B cell (primary cell): ENCODE measurements at regions of chr2 and their contacts with region 1.

Region 1: DNA sequence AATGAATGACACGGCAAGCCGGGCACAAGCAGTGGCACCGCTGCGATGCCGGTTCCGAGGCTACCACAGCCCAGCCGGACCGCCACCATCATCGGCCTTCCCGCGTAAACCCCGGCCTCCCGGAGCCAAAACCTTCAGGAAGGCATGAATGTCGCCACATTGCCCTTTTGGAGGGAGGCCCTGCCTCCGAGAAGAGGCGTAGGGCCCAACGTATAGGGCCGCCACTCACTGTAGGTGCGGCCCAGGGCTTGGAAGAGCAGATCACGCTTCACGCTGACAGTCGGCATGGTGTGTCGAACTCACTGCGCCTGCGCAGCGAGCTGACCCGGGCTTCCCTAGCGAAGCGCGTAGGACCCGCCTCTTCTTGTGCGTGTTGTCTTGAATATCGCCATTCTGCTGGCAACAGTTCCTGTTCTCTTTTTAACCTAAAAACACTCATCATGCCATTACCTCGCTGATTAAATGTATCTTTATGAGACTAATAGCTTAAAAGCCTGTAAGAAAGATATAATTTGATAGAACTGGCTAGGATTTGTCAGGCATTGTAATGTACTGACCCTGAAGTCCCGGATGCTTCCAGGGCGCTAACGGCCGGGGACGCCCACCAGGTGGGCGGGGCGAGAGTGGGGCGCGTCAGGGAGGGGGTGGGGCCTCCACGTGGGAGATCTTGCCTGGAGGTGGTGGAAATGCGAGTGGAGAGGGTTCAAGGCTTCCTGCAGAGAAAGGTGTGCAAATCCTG is at the start of gene FARSB:
- DNase-seq: peak; percentile 98
- ATAC-seq: peak; percentile 93
- H3K4me3 ChIP-seq: peak within 1 kb of the TSS; percentile 72 to 95 (median 93)
- H3K4me3 Mint-ChIP-seq: peak within 1 kb of the TSS; percentile 99
- H3K27ac ChIP-seq: peak within 1 kb of the TSS; percentile 98
- H3K27ac Mint-ChIP-seq: peak within 1 kb of the TSS; percentile 100
- H3K4me1 ChIP-seq: peaks cover 21 to 26% of the 10 kb centered on the region in 2 donors
- H3K4me1 Mint-ChIP-seq: peaks cover 39% of the 10 kb centered on the region
- H3K27me3 ChIP-seq: no peaks in the 10 kb centered on the region
- H3K27me3 Mint-ChIP-seq: no peaks in the 10 kb centered on the region
- CTCF ChIP-seq: no peak
- total RNA-seq, gene FARSB: 9.9 and 10.2 TPM in 2 replicates

Region 2: DNA sequence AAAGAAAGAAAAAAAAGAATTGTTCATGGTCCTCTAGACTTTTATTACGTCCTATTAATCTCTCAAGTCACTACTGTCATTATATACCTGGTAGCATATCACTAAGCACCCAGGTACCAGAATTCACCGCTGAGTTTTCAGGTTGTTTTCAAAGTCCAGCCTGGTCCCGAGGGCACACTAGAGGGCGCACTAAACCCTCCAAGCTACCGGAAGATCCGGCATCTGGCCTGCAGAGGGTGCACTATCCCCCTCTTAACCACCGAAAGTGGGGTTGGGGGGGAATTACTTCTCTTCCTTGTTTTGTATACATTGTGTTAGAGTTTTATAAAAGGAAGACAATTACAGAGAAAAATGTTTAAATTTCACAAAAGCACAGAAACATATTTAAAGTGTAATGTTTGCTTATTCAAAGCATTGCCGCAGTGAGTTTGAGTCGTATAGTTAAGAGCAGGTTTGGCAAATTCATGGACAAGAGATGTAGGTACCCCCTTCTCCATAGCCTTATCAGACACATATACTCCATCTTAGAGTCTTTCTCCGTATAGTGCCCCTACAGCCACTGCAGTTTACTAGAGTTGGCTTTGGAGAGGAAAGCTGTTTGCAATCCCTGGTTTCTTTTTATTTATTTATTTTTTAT is 34.7 kb after region 1 on chr2:
- CTCF ChIA-PET with region 1: interaction called, 4 read pairs
- POLR2A ChIA-PET with region 1: no interaction called
- intact Hi-C with region 1: loop called (anchors 2 kb)
- DNase-seq: peak; percentile 86
- ATAC-seq: peak; percentile 100
- H3K4me3 ChIP-seq: no peak overlapping the region
- H3K4me3 Mint-ChIP-seq: no peak overlapping the region
- H3K27ac ChIP-seq: no peak overlapping the region
- H3K27ac Mint-ChIP-seq: no peak overlapping the region
- H3K4me1 ChIP-seq: peaks cover 4 to 6% of the 10 kb centered on the region in 2 donors
- H3K4me1 Mint-ChIP-seq: peaks cover 5% of the 10 kb centered on the region
- H3K27me3 ChIP-seq: no peaks in the 10 kb centered on the region
- H3K27me3 Mint-ChIP-seq: peaks cover 16% of the 10 kb centered on the region
- CTCF ChIP-seq: peak; percentile 100

Region 3: GRCh38 chr2:222860740-222861410 is 204.9 kb after region 1 on chr2 and contains the start of gene ACSL3:
- CTCF ChIA-PET with region 1: no interaction called
- POLR2A ChIA-PET with region 1: no interaction called
- intact Hi-C with region 1: loop called (anchors 1 kb)
- DNase-seq: peak; percentile 93
- ATAC-seq: peak; percentile 97
- H3K4me3 ChIP-seq: peak within 1 kb of the TSS; percentile 61 to 93 (median 69)
- H3K4me3 Mint-ChIP-seq: peak within 1 kb of the TSS; percentile 82
- H3K27ac ChIP-seq: peak within 1 kb of the TSS; percentile 56 to 89
- H3K27ac Mint-ChIP-seq: peak within 1 kb of the TSS; percentile 88
- H3K4me1 ChIP-seq: peaks cover 20 to 23% of the 10 kb centered on the region in 2 donors
- H3K4me1 Mint-ChIP-seq: peaks cover 14% of the 10 kb centered on the region
- H3K27me3 ChIP-seq: no peaks in the 10 kb centered on the region
- H3K27me3 Mint-ChIP-seq: no peaks in the 10 kb centered on the region
- CTCF ChIP-seq: peak; percentile 8
- total RNA-seq, gene ACSL3: 35.9 and 46.0 TPM in 2 replicates

Region 4: DNA sequence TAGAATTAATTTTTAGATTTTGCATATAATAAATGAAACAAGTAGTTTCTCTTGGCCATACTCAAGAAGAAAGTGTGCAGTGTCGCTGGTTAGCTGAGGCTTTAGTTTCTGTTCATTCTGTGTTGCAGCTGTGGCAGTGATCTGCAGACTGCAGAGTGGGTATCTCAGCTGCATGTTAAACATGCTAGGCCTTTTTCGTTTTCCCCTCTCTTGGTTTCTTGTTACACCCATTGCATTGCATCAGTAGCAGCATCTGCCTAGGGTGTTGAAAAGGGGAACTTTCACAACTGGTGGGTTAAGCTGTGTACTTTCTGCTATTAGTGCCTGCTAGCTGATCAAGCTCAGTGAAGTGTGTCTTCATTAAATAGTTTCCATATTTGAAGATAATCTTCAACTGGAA is 256.2 kb after region 1 on chr2:
- CTCF ChIA-PET with region 1: no interaction called
- POLR2A ChIA-PET with region 1: no interaction called
- intact Hi-C with region 1: loop called (anchors 2 kb)
- DNase-seq: peak; percentile 80
- ATAC-seq: peak; percentile 99
- H3K4me3 ChIP-seq: peak overlapping the region in 3 of 5 experiments; percentile 2 to 37 (median 36)
- H3K4me3 Mint-ChIP-seq: peak overlapping the region; percentile 73
- H3K27ac ChIP-seq: peak overlapping the region; percentile 74 to 86
- H3K27ac Mint-ChIP-seq: peak overlapping the region; percentile 90
- H3K4me1 ChIP-seq: peaks cover 31% of the 10 kb centered on the region in 2 donors
- H3K4me1 Mint-ChIP-seq: peaks cover 45% of the 10 kb centered on the region
- H3K27me3 ChIP-seq: no peaks in the 10 kb centered on the region
- H3K27me3 Mint-ChIP-seq: no peaks in the 10 kb centered on the region
- CTCF ChIP-seq: no peak

Region 5: GRCh38 chr2:223957092-223957851 is 1301.3 kb after region 1 on chr2 and contains the start of gene MRPL44:
- CTCF ChIA-PET with region 1: no interaction called
- POLR2A ChIA-PET with region 1: no interaction called
- intact Hi-C with region 1: loop called (anchors 10 kb)
- DNase-seq: peak; percentile 96
- ATAC-seq: peak; percentile 99
- H3K4me3 ChIP-seq: peak within 1 kb of the TSS; percentile 66 to 94 (median 86)
- H3K4me3 Mint-ChIP-seq: peak within 1 kb of the TSS; percentile 94
- H3K27ac ChIP-seq: peak within 1 kb of the TSS; percentile 72 to 78
- H3K27ac Mint-ChIP-seq: peak within 1 kb of the TSS; percentile 97
- H3K4me1 ChIP-seq: peaks cover 48 to 52% of the 10 kb centered on the region in 2 donors
- H3K4me1 Mint-ChIP-seq: peaks cover 67% of the 10 kb centered on the region
- H3K27me3 ChIP-seq: no peaks in the 10 kb centered on the region
- H3K27me3 Mint-ChIP-seq: no peaks in the 10 kb centered on the region
- CTCF ChIP-seq: no peak
- total RNA-seq, gene MRPL44: 23.4 and 26.7 TPM in 2 replicates